ENCODE measurements at regions of chr14 and their contacts with region 1.

Region 1: GRCh38 chr14:54085232-54085761 is 128.7 kb upstream of the BMP4 start:
- DNase-seq: no peak
- H3K4me3 ChIP-seq: no peak overlapping the region
- H3K27ac ChIP-seq: no peak overlapping the region
- H3K4me1 ChIP-seq: no peaks in the 10 kb centered on the region
- H3K27me3 ChIP-seq: no peaks in the 10 kb centered on the region
- CTCF ChIP-seq: no peak

Region 2: DNA sequence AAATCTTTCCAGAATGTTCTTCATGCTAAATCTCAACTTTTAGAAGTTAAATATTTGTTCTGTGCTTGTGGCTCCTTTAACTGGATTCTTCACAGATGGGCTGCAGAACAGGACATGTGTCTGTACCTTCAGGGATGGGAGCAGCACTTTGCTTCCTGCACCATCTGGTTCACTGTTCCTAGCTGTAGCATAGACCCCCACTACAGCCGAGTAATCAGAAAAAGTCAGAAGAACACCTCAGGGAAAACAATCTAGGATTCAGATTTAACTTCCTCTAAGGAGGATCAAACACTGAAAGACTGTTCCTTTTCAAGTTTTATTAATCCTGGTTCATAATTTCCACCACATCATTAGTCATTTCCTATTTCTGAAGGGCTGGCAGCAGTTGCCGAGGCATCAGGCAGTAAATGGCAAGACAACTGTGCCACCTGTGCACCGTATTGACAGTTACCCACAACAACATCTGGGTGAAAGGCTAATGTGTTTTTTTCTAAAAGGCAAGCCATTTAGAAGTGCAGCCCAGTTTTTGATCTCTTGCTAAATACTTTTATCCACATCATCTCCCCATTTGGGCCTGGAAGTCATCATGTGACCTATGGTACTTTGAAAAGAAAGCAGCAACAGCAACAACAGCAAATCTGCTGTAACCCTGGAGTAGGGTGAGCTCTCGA is 84.1 kb after region 1 on chr14:
- CTCF ChIA-PET with region 1: no interaction called
- dilution Hi-C with region 1: loop called (anchors 5 kb)
- in situ Hi-C with region 1: no loop called
- intact Hi-C with region 1: loop called (anchors 2 kb)
- DNase-seq: peak; percentile 89
- H3K4me3 ChIP-seq: no peak overlapping the region
- H3K27ac ChIP-seq: peak overlapping the region; percentile 89
- H3K4me1 ChIP-seq: peaks cover 42% of the 10 kb centered on the region
- H3K27me3 ChIP-seq: no peaks in the 10 kb centered on the region
- CTCF ChIP-seq: no peak